Adrenal gland (tissue), 19 donors: ENCODE measurements at regions of chr4 and their contacts with region 1.

Region 1: DNA sequence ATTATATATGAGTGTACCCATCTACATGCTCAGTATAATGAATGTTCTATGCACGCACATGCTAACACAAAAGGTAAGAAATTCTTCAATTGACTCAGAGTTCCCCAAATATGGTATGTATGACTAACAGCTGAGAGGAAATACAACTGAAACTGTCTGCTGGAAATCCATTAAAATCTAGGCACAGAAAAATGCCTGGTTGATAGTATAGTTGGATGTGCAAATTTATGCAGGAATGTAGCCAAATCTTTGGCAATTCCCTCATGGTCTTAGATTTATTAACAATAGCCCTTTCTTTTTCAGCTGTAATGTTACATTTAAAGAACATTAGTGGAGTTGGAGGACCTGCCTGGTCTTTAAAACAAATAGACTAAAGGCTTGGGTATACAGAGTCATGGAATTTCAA is 5.5 kb downstream of the CAMK2D start:
- DNase-seq: no peak
- H3K4me3 ChIP-seq: no peak overlapping the region
- H3K27ac ChIP-seq: no peak overlapping the region
- H3K4me1 ChIP-seq: peaks cover 6 to 40% of the 10 kb centered on the region in 2 donors
- H3K27me3 ChIP-seq: no peaks in the 10 kb centered on the region
- CTCF ChIP-seq: no peak
- POLR2A ChIP-seq: no peak

Region 2: GRCh38 chr4:113684534-113685091 is 71.4 kb before region 1 on chr4:
- intact Hi-C with region 1: loop called in 1 of 2 experiments (anchors 10 kb)
- DNase-seq: peak; percentile 35 to 91 (median 66)
- H3K4me3 ChIP-seq: no peak overlapping the region
- H3K27ac ChIP-seq: peak overlapping the region in 4 of 5 donors; percentile 4 to 50 (median 39)
- H3K4me1 ChIP-seq: peaks cover 0 to 15% of the 10 kb centered on the region in 2 donors
- H3K27me3 ChIP-seq: no peaks in the 10 kb centered on the region
- CTCF ChIP-seq: peak; percentile 28 to 57 (median 45)
- POLR2A ChIP-seq: no peak